ENCODE measurements at regions of chr10 and their contacts with region 1.

Region 1: DNA sequence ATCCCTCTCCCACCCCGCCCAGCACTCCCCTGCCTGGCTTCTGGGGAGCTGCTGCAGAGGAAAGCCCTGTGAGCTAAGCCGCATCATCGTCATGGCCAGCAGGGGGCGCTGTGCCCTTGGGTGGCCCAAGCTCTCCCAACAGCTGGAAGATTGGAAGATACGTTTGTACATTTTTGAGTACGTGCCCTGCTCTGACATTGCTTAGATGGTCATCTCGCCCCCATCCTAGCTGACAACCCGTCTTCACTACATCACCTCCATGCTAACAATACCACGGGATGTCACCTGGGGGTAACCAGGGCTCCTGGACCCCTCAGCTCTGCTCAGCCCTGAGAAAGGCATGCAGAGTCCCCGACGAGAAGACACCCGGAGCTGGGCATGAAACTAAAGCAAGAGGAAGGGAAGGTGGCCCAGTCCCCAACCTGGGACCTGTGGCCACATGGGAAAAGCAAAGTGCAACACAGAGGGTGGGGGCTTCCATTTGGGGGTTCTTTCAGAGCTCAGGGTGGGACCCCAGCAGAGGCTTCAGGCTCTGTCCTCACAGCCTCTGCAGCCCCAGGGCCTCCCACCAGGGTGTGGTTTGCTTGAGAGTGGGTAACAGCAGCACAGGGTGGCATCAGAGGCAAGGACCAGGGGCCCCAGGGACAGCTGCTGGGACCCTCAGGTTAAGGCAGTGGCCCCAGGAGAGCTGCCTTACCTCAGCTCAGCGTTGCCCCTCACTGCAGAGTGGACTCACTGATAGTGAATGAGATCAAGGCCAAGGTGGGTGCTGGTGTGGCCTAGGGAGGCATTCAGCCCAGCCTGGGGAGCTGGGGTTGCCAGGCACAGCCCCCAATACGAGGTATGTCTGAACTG is 136.7 kb downstream of the PTPN20 start:
- DNase-seq: peak; percentile 45
- ATAC-seq: peak; percentile 94
- H3K4me3 ChIP-seq: no peak overlapping the region
- H3K27ac ChIP-seq: no peak overlapping the region; the same call in 1 of the 2 replicates
- H3K4me1 ChIP-seq: no peaks in the 10 kb centered on the region
- H3K27me3 ChIP-seq: no peaks in the 10 kb centered on the region
- CTCF ChIP-seq: peak; percentile 77 to 89 (median 89); a peak in 5 of 6 replicates
- POLR2A ChIP-seq: no peak
- RAD21 ChIP-seq: peak; percentile 88

Region 2: GRCh38 chr10:47311932-47312662 is 264.2 kb after region 1 on chr10:
- CTCF ChIA-PET with region 1: interaction called, 51 read pairs
- POLR2A ChIA-PET with region 1: interaction called, 3 read pairs
- RAD21 ChIA-PET with region 1: interaction called, 9 to 22 read pairs
- intact Hi-C with region 1: loop called (anchors 2 kb)
- DNase-seq: peak; percentile 31
- ATAC-seq: peak; percentile 91
- H3K4me3 ChIP-seq: no peak overlapping the region
- H3K27ac ChIP-seq: no peak overlapping the region
- H3K4me1 ChIP-seq: no peaks in the 10 kb centered on the region; a peak in 1 of 4 replicates
- H3K27me3 ChIP-seq: peaks cover 6% of the 10 kb centered on the region; the same call in 1 of the 2 replicates
- CTCF ChIP-seq: peak; percentile 63 to 76 (median 66)
- POLR2A ChIP-seq: no peak
- RAD21 ChIP-seq: peak; percentile 86

Region 3: GRCh38 chr10:47340608-47341170 is 292.8 kb after region 1 on chr10:
- CTCF ChIA-PET with region 1: interaction called, 39 read pairs
- POLR2A ChIA-PET with region 1: no interaction called
- RAD21 ChIA-PET with region 1: interaction called, 4 to 6 read pairs
- intact Hi-C with region 1: loop called (anchors 1 kb)
- DNase-seq: peak; percentile 48
- ATAC-seq: peak; percentile 96
- H3K4me3 ChIP-seq: no peak overlapping the region
- H3K27ac ChIP-seq: no peak overlapping the region
- H3K4me1 ChIP-seq: no peaks in the 10 kb centered on the region
- H3K27me3 ChIP-seq: no peaks in the 10 kb centered on the region
- CTCF ChIP-seq: peak; percentile 81 to 98 (median 97)
- POLR2A ChIP-seq: no peak
- RAD21 ChIP-seq: peak; percentile 86